ENCODE measurements at regions of chr16 and their contacts with region 1.

Region 1: GRCh38 chr16:1543085-1543896 is 9.8 kb downstream of the TMEM204 start:
- DNase-seq: peak; percentile 84
- ATAC-seq: peak; percentile 85
- H3K4me3 Mint-ChIP-seq: peak overlapping the region; percentile 71
- H3K27ac Mint-ChIP-seq: peak overlapping the region; percentile 99
- H3K4me1 Mint-ChIP-seq: peaks cover 78% of the 10 kb centered on the region
- H3K27me3 Mint-ChIP-seq: no peaks in the 10 kb centered on the region

Region 2: GRCh38 chr16:1474796-1475551 is 68.3 kb before region 1 on chr16 and contains the start of gene CLCN7:
- CTCF ChIA-PET with region 1: no interaction called
- POLR2A ChIA-PET with region 1: no interaction called
- intact Hi-C with region 1: loop called in 1 of 2 experiments (anchors 1 kb)
- DNase-seq: peak; percentile 95
- ATAC-seq: peak; percentile 91
- H3K4me3 Mint-ChIP-seq: peak within 1 kb of the TSS; percentile 73
- H3K27ac Mint-ChIP-seq: peak within 1 kb of the TSS; percentile 81
- H3K4me1 Mint-ChIP-seq: peaks cover 22% of the 10 kb centered on the region
- H3K27me3 Mint-ChIP-seq: no peaks in the 10 kb centered on the region
- total RNA-seq, gene CLCN7: 29.9 to 33.7 TPM

Measured in activated CD4-positive, alpha-beta T cell treated with anti-CD3 and anti-CD28 coated beads for 36 hours (primary cell).